ENCODE measurements at regions of chr17 and their contacts with region 1.

Region 1: GRCh38 chr17:64129764-64130558 is at the start of gene ERN1:
- DNase-seq: peak; percentile 96
- ATAC-seq: peak; percentile 98
- total RNA-seq, gene ERN1: 9.0 TPM

Region 2: GRCh38 chr17:64025732-64026294 is 104.1 kb before region 1 on chr17:
- intact Hi-C with region 1: loop called (anchors 5 kb)
- DNase-seq: peak; percentile 85
- ATAC-seq: peak; percentile 82

Region 3: GRCh38 chr17:64051153-64051552 is 78.8 kb before region 1 on chr17:
- intact Hi-C with region 1: no loop called
- DNase-seq: no peak
- ATAC-seq: peak; percentile 50

Region 4: GRCh38 chr17:64174686-64175456 is 44.9 kb after region 1 on chr17:
- intact Hi-C with region 1: no loop called
- DNase-seq: no peak
- ATAC-seq: peak; percentile 60

Measured in left ventricle myocardium superior (tissue), 1 donor.